Mucosa of descending colon (tissue), 3 donors: ENCODE measurements at regions of chr7 and their contacts with region 1.

Region 1: DNA sequence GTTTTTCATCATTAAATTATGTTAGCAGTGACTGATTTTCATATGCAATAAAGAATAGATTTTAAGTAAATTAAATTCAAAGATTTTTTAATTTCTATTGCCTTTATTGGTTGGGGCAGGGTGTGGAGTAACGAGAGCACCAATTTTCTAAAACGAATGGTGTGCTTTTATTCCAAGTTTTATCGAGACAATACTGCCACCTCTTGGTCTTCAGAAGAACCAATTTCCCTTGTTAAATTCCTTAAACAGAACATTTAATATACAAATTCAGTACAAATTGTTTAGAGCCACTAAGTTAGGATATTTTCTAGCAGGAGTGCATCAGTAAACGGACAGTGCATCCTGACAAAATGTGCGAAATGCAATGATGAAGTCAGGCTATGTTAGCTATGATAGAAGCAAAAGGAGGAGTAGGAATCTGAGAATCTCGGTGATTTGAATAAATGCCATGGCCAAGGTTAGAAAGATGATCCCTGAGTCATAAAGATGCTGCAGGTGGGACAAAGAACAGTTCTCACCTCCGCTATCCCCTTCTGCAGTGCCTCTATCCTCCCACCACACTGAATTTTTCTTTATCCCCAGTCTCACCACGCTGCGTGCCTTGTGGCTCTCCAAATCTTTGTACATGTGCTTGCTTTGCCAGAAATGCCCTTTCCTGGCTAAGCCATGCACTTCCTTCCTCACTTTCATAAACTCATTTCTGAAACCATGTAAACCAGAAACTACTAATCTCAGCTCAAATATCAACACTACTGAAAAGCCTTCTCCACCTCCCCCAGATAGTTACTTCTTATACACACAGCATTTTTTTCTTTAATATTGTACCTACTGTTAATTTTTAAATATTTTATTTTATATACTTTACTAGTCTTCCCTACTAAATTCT is 31.9 kb upstream of the AGBL3 start:
- DNase-seq: no peak
- ATAC-seq: no peak
- H3K4me3 ChIP-seq: no peak overlapping the region
- H3K4me1 ChIP-seq: no peaks in the 10 kb centered on the region
- CTCF ChIP-seq: peak; percentile 15

Region 2: DNA sequence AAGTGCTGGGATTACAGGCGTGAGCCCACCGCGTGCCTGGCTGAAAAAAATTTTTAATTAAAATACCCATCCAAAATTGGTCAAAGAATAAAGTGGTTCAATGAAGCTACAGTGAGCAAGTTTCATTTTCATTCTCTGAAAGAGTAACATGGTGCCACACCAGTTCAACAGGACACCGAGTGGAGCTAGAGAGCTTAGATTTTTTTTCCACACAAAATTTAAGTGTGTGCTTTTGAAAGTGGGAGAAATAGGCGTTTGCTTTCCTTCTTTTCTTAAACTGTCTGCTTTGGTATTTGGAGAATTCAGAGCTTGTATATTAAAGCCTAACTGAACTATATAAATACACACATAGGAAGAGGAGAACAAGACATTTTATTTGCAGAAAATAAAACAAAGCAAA is 264.4 kb before region 1 on chr7:
- intact Hi-C with region 1: loop called in 1 of 2 experiments (anchors 10 kb)
- DNase-seq: no peak
- ATAC-seq: peak; percentile 38
- H3K4me3 ChIP-seq: no peak overlapping the region
- H3K4me1 ChIP-seq: no peaks in the 10 kb centered on the region
- CTCF ChIP-seq: no peak

Region 3: DNA sequence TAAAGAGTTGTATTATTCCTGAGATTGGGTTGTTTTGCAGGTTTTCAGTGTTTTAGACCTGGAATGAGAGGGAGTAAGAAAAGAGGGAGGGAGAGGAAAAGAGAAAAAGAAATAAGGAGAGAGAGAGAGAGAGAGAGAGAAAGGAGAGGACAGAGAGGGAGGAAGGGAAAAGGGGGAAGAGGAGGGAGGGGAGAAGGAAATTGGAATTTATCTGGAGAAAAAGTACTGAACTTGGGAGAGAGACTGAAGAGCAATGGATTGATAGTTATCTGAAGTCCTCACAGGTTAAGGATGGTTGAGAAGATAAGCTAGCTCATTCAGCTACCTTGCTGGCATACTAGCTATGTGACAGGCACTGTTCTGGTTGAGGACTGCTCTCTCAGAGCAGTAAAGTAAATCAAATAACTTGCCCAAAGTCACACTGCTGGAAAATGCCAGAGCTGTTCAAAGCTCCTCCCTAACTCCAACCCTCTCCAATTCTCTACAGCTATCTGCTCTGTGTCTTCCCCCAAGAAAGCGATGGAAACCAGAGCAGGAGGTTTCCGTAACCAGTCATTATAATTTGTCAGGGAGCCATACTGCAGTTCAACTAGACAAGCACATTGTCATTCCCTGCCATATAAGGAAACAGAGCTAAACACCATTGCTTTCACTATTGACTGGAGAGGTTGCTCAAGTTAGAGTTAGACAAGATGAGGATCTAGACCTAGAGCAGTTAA is 164.3 kb before region 1 on chr7:
- intact Hi-C with region 1: no loop called
- DNase-seq: peak in 1 of 3 donors; percentile 9
- ATAC-seq: peak; percentile 56
- H3K4me3 ChIP-seq: no peak overlapping the region
- H3K4me1 ChIP-seq: no peaks in the 10 kb centered on the region
- CTCF ChIP-seq: no peak

Region 4: DNA sequence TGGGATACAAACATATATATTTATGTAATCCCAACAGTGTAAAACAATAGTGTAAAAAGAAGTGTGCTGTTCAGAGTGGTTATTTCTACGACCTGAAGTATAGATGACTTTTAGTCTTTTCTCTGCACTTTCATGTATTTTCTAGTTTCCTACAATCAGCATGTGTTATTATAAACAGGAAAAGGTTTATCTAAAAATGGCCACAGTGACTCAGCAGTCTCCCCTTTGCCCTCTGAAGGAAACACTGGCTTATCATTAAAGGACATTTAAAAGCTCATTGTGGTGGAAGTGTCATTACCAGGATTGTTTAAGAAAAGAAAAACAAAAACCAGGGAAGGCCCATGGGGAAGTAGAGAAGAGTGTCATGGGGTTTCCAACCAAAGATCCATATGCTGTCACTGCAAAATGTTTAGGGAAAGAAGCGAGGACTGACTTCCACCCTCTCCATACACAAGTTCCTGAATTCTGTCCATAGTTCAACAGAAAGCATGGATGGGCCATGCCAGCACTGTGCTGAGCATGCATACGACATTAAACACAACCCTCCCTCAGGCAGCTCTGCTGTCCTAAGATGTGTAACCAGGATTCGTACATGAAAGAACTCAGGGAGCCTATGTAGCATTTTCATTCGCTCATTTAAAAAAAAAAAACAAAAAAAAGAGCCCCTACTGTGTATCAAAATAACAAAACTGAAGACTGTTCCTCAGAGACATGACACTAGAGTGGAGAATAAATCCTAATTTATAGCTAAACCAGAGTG is 205.8 kb after region 1 on chr7:
- intact Hi-C with region 1: no loop called
- DNase-seq: no peak
- ATAC-seq: peak; percentile 62
- H3K4me3 ChIP-seq: no peak overlapping the region
- H3K4me1 ChIP-seq: no peaks in the 10 kb centered on the region
- CTCF ChIP-seq: no peak